Common myeloid progenitor, CD34-positive (primary cell): ENCODE measurements at regions of chr19 and their contacts with region 1.

Region 1: GRCh38 chr19:46279177-46279576 is 17.7 kb upstream of the HIF3A start:
- DNase-seq: no peak
- H3K4me3 ChIP-seq: no peak overlapping the region
- H3K27ac ChIP-seq: no peak overlapping the region
- H3K4me1 ChIP-seq: peaks cover 0 to 6% (median 2%) of the 10 kb centered on the region in 4 experiments
- H3K27me3 ChIP-seq: peaks cover 0 to 4% (median 0%) of the 10 kb centered on the region in 5 experiments

Region 2: DNA sequence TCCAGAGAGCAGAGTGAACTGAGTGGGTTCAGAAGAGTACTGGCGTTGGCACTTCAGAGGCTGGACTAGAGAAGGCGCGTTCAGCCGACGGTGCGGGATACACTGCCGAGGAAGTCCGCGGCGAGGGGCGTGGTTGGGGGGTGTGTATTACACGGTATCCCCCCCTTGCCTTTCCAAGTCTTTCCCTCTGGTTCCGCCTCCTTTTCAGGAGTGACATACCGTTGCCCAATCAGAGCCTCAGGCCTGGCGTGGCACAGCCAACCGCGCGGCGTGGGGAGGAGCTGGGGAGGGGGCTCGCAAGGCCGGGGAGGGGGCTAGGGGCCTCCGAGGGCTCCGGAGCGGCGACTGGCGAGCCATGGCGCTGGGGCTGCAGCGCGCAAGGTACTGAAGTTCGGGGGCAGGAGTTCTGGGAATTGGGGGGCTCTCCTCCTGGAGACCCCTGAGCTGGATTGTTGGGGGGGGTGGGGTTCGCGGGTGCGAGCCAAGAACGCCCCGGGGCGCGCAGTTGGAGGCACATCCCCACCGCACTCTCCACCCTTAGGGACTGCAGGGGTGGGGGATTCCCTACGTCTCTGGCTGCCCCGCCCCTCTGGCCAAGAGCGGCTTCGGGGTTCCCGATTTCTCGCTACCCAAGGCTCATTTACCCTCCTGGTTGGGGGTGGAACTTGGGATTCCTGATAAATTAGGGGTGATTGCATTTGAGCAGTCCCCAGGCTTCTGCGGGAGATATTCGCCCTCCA is 17.7 kb after region 1 on chr19 and contains the start of gene HIF3A:
- CTCF ChIA-PET with region 1: interaction called, 21 read pairs
- POLR2A ChIA-PET with region 1: no interaction called
- DNase-seq: peak in 2 of 3 donors; percentile 51 to 56
- H3K4me3 ChIP-seq: peak within 1 kb of the TSS in 3 of 7 experiments; percentile 32 to 68 (median 62)
- H3K27ac ChIP-seq: no peak within 1 kb of the TSS
- H3K4me1 ChIP-seq: peaks cover 0 to 38% (median 20%) of the 10 kb centered on the region in 4 experiments
- H3K27me3 ChIP-seq: peaks cover 0 to 26% (median 9%) of the 10 kb centered on the region in 5 experiments